ENCODE measurements at regions of chr13 and their contacts with region 1.

Region 1: GRCh38 chr13:36275190-36276002 is 22.2 kb downstream of the CCDC169 start:
- DNase-seq: no peak
- H3K4me3 ChIP-seq: no peak overlapping the region
- H3K27ac ChIP-seq: no peak overlapping the region
- H3K4me1 ChIP-seq: no peaks in the 10 kb centered on the region
- H3K27me3 ChIP-seq: no peaks in the 10 kb centered on the region
- CTCF ChIP-seq: peak; percentile 38 to 57 (median 53)
- EP300 ChIP-seq: no peak
- POLR2A ChIP-seq: no peak

Region 2: GRCh38 chr13:35978603-35979316 is 296.6 kb before region 1 on chr13:
- in situ Hi-C with region 1: loop called (anchors 5 to 25 kb)
- intact Hi-C with region 1: loop called (anchors 5 kb)
- DNase-seq: no peak
- H3K4me3 ChIP-seq: no peak overlapping the region
- H3K27ac ChIP-seq: peak overlapping the region; percentile 49 to 76 (median 60)
- H3K4me1 ChIP-seq: no peaks in the 10 kb centered on the region
- H3K27me3 ChIP-seq: no peaks in the 10 kb centered on the region
- CTCF ChIP-seq: peak; percentile 73 to 82 (median 77)
- EP300 ChIP-seq: no peak
- POLR2A ChIP-seq: no peak

Region 3: DNA sequence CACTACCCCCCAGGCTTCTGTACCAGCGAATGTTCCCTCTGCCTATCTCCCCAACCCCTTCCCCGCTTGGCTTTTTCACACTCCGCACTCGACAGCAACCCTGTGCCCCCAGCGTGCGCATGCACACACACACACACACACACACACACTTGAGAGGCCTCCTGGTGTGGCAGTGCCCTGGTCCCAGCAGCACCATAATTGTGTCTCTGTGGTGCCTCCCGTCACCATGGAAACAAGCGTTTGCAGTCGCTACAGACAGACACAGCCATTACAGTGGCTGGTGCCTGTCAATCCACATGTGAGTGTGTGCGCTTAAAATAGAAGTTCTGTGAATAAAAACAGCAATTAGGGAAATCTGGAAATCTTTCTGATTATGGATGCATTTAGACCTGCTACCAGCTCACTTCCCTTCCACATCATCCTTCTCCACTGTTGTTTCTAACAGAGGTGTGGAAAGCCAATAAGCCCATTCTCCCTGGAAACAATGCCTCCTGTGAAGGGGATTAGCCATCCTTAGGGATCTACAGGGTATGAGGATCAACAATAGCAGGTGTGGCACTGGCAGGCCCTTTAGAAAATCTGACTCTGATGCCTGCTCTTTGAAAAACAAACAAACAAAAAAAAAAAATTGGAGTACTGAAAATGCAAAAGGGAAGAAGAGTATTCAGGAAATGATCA is 290.5 kb before region 1 on chr13:
- in situ Hi-C with region 1: loop called in 3 of 4 experiments (anchors 5 to 25 kb)
- intact Hi-C with region 1: loop called (anchors 5 kb)
- DNase-seq: no peak
- H3K4me3 ChIP-seq: no peak overlapping the region
- H3K27ac ChIP-seq: no peak overlapping the region
- H3K4me1 ChIP-seq: no peaks in the 10 kb centered on the region
- H3K27me3 ChIP-seq: no peaks in the 10 kb centered on the region
- CTCF ChIP-seq: no peak
- EP300 ChIP-seq: no peak
- POLR2A ChIP-seq: no peak

Region 4: GRCh38 chr13:36046672-36047071 is 228.7 kb before region 1 on chr13:
- in situ Hi-C with region 1: no loop called
- intact Hi-C with region 1: no loop called
- DNase-seq: no peak
- H3K4me3 ChIP-seq: no peak overlapping the region
- H3K27ac ChIP-seq: no peak overlapping the region
- H3K4me1 ChIP-seq: no peaks in the 10 kb centered on the region
- H3K27me3 ChIP-seq: no peaks in the 10 kb centered on the region
- CTCF ChIP-seq: no peak
- EP300 ChIP-seq: no peak
- POLR2A ChIP-seq: no peak